ENCODE measurements at regions of chr7 and their contacts with region 1.

Region 1: GRCh38 chr7:41696314-41696916 is 6.5 kb downstream of the INHBA start:
- DNase-seq: peak; percentile 72 to 79
- ATAC-seq: peak; percentile 67 to 83 (median 74)
- H3K4me3 ChIP-seq: peak overlapping the region in 8 of 10 donors; percentile 21 to 64 (median 50)
- H3K27ac ChIP-seq: peak overlapping the region in 7 of 10 donors; percentile 24 to 82 (median 54)
- H3K4me1 ChIP-seq: peaks cover 0 to 55% (median 29%) of the 10 kb centered on the region in 9 donors
- H3K27me3 ChIP-seq: peaks cover 0 to 20% (median 5%) of the 10 kb centered on the region in 7 donors
- CTCF ChIP-seq: peak; percentile 55 to 79 (median 74)

Region 2: DNA sequence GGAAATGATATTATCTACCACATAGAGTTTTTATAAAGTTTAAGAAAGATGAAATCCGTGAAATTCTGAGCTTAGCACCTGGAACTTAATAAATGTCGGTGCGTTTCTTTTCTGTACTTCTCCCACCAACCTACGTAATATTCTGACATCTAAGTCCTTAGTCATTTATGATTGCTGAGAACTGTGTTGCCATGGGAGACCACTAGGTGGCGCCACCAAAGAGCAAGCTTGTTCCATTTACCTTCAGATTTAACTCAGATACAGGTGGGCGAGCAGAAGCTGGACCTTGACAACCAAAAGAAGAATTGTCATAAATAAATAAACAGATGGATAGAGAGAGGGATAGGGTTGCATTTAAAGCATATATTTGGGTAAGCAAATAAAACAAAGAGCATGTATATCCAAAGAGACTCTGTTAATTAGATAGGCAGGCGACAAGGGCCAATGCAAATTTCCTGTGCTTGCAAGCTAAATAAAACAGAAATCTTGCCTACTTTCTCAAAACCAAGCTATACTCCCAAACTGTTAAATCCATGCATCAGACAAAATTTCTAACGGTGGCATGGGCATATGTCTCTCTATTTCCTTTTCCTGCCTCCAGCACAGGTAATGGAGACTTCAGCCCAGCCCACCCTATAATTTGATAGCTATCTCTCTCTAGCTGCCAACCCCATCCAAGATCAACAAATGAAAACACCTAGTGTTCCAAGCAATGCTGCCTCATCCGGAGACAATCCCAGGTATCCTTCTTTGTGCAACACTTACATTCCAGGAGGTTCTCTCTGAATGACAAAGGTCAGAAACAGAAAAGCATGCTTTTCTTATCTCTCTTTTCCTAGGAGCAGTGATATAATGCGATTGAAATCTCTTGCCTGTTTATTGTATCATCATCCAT is 693.1 kb before region 1 on chr7:
- intact Hi-C with region 1: loop called in 5 of 10 experiments (anchors 5 to 10 kb)
- DNase-seq: peak in 1 of 2 donors; percentile 37
- ATAC-seq: no peak
- H3K4me3 ChIP-seq: no peak overlapping the region
- H3K27ac ChIP-seq: no peak overlapping the region
- H3K4me1 ChIP-seq: peaks cover 0 to 26% (median 5%) of the 10 kb centered on the region in 9 donors
- H3K27me3 ChIP-seq: no peaks in the 10 kb centered on the region
- CTCF ChIP-seq: peak; percentile 43 to 76 (median 65)

Region 3: DNA sequence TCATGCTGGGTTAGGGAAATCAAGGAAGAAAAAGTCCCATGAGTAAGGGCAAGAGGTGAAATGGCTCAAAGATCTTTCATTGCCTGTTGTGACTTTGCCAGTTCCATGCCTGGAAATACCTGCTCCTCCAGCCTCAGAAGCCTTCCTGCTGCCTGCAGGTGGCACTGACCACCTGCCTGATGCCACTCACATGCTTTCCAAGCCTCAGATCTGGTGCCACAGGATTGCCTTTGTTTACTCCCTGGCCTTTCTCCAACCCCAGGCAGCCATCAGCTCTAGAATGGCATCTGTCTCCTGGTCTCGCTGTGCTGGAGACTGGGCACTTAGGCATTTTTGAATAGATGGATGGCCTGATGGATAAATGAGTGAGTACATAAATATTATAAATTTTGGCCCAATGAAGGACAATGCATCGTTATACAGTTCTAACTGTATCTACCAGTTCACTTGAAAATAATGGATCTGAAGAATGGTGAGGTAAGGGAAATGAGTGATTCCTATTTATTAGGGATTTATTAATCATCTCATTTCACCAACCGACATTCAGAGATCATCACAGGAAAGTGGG is 650.8 kb before region 1 on chr7:
- intact Hi-C with region 1: loop called in 3 of 10 experiments (anchors 5 to 10 kb)
- DNase-seq: no peak
- ATAC-seq: no peak
- H3K4me3 ChIP-seq: no peak overlapping the region
- H3K27ac ChIP-seq: peak overlapping the region in 7 of 10 donors; percentile 18 to 78 (median 62)
- H3K4me1 ChIP-seq: peaks cover 0 to 33% (median 23%) of the 10 kb centered on the region in 9 donors
- H3K27me3 ChIP-seq: no peaks in the 10 kb centered on the region
- CTCF ChIP-seq: peak in 3 of 9 donors; percentile 22 to 23 (median 23)

Measured in heart right ventricle (tissue), 16 donors.